HCT116 (cell line): ENCODE measurements at regions of chr15 and their contacts with region 1.

Region 1: DNA sequence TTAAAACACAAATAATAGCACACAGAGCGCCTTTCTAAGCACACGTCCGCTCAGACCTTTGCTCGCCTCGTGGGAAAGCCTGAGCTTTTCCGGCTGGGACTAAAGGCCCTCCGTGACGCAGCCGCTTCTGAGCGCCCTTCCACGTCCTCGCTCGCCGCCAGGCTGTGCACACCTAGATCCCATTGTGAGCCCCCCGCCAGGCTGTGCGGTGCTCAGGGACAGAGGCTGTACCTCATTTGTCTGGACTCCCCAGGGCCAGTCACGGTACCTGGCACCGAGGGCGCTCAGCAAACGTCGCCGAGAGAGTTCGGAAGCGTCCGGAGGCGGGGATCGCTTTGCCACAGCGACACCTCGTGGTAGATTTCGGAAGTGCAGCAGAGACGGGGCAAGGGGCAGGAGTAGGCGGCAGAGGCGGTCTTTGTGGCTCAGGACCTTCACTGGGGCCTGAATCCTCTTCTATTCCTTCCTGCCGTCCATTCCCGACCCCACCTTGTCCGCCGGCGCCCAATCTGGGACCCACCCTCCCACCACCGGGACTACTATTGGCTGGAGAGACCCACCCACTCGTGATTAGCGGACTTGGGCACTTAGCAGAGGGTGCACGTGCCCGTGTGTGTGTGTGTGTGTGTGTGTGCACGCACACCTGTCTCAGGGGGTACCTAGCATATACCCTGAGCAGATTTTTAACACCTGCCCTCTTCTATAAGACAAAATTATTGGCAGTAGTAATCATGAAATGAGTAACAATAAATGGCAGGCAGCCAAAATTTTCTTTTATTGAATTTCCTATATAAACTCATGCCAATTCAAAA is 65.6 kb downstream of the RHCG start:
- DNase-seq: peak; percentile 57
- ATAC-seq: peak; percentile 97
- H3K4me3 ChIP-seq: peak overlapping the region; percentile 39 to 52
- H3K27ac ChIP-seq: no peak overlapping the region
- H3K4me1 ChIP-seq: peaks cover 4 to 13% of the 10 kb centered on the region in 2 experiments; a peak in 2 of 4 replicates
- H3K27me3 ChIP-seq: no peaks in the 10 kb centered on the region
- CTCF ChIP-seq: peak; percentile 89 to 95 (median 93)
- POLR2A ChIP-seq: no peak
- RAD21 ChIP-seq: peak; percentile 81

Region 2: DNA sequence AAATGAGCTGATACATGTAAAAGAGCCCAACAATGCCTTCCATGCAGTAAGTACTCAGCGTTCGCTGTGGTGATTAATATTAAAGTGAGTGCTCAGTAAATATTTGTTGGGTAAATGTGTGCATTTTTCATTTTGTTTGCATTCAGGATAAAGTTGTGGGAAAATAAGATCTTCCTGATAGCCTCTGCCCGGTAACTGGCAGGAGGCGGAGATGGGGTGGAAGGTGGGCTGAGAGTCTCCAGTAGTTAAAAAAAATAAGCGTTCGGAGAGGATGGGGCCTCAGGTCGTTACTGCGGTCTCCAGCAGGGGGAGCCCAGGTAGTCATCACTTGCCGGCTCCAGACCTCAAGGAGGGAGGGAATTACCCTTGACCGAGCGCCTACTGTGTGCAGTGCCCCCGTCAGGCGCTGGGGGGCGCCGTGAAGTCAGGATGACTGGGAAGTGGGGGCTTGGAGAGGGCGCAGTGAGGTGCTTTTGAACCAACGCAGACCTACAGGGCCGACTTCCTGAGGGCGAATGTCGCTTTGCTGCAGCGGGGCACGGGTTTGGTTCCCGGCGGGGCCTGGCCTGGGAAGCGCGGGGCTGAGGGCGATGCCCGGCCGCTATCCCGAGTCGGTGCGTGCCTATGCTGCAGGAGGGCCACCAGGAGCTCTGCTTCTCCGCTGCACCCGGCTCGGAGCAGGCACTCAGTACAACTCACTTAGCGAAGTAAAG is 14.4 kb before region 1 on chr15:
- CTCF ChIA-PET with region 1: interaction called, 8 read pairs
- POLR2A ChIA-PET with region 1: interaction called, 3 read pairs
- RAD21 ChIA-PET with region 1: interaction called in 1 of 2 experiments, 3 read pairs
- intact Hi-C with region 1: loop called (anchors 1 kb)
- DNase-seq: peak; percentile 71
- ATAC-seq: peak; percentile 87
- H3K4me3 ChIP-seq: no peak overlapping the region
- H3K27ac ChIP-seq: no peak overlapping the region
- H3K4me1 ChIP-seq: peaks cover 0 to 6% of the 10 kb centered on the region in 2 experiments; a peak in 2 of 4 replicates
- H3K27me3 ChIP-seq: peaks cover 4% of the 10 kb centered on the region; the same call in 1 of the 2 replicates
- CTCF ChIP-seq: peak; percentile 98 to 99 (median 99)
- POLR2A ChIP-seq: no peak
- RAD21 ChIP-seq: peak; percentile 65

Region 3: GRCh38 chr15:89665449-89666181 is 234.9 kb after region 1 on chr15:
- CTCF ChIA-PET with region 1: no interaction called
- POLR2A ChIA-PET with region 1: no interaction called
- RAD21 ChIA-PET with region 1: no interaction called
- intact Hi-C with region 1: no loop called
- DNase-seq: no peak
- ATAC-seq: no peak
- H3K4me3 ChIP-seq: no peak overlapping the region
- H3K27ac ChIP-seq: no peak overlapping the region
- H3K4me1 ChIP-seq: peaks cover 0 to 5% of the 10 kb centered on the region in 2 experiments; a peak in 1 of 4 replicates
- H3K27me3 ChIP-seq: no peaks in the 10 kb centered on the region
- CTCF ChIP-seq: no peak
- POLR2A ChIP-seq: no peak
- RAD21 ChIP-seq: no peak